ENCODE measurements at regions of chr9 and their contacts with region 1.

Region 1: GRCh38 chr9:134434894-134435506 is 108.7 kb downstream of the RXRA start:
- DNase-seq: peak; percentile 94
- H3K4me3 ChIP-seq: no peak overlapping the region
- H3K27ac ChIP-seq: peak overlapping the region; percentile 15
- H3K4me1 ChIP-seq: peaks cover 7% of the 10 kb centered on the region
- H3K27me3 ChIP-seq: no peaks in the 10 kb centered on the region
- CTCF ChIP-seq: no peak
- POLR2A ChIP-seq: no peak

Region 2: DNA sequence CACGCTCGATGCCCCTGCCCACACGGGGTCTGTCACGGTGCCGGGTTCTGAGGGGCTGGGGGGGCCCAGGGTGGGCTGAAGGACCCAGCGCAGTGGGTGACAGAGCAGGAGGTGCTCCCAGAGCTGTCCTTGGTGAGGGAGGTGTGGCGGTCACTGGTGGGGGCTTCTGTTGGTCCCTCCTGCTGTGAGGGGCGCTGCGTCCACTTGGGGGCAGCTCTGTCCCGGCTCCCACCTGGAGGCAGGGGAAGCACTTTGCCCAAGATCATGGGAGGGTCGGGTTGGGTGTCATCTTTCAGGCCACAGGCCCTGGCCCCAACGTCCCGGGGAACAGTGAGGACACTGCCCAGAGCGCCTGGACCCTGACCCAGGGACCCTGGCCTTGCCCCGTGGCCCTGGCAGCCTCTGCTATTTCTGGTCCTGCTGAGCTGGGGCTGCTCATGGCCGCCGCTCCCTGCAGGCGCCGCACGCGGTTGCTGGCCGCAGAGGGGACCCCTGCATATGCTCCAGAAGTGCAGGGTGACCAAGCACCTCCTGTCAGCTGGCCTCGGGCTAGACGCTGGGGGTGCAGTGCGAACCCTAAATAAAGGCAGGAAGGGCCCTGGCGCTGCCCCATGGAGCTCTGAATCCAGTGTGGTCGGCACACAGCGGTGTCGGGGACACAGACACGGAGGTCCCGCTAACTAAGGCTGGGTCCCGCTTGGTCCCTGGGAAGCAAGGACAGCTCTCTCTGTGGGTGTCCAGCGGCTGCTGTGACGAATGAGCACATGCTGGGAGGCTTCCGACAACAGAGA is 259.0 kb before region 1 on chr9:
- CTCF ChIA-PET with region 1: interaction called, 15 read pairs
- POLR2A ChIA-PET with region 1: no interaction called
- dilution Hi-C with region 1: no loop called
- intact Hi-C with region 1: no loop called
- DNase-seq: no peak
- H3K4me3 ChIP-seq: no peak overlapping the region
- H3K27ac ChIP-seq: no peak overlapping the region
- H3K4me1 ChIP-seq: no peaks in the 10 kb centered on the region
- H3K27me3 ChIP-seq: peaks cover 2 to 3% of the 10 kb centered on the region in 2 experiments
- CTCF ChIP-seq: no peak
- POLR2A ChIP-seq: no peak

Region 3: GRCh38 chr9:134375430-134376385 is 59.3 kb before region 1 on chr9:
- CTCF ChIA-PET with region 1: interaction called, 8 read pairs
- POLR2A ChIA-PET with region 1: no interaction called
- dilution Hi-C with region 1: no loop called
- intact Hi-C with region 1: loop called (anchors 2 kb)
- DNase-seq: peak; percentile 44
- H3K4me3 ChIP-seq: no peak overlapping the region
- H3K27ac ChIP-seq: peak overlapping the region; percentile 63
- H3K4me1 ChIP-seq: peaks cover 36% of the 10 kb centered on the region
- H3K27me3 ChIP-seq: no peaks in the 10 kb centered on the region
- CTCF ChIP-seq: peak in 1 of 2 donors; percentile 5
- POLR2A ChIP-seq: no peak

Region 4: GRCh38 chr9:134399435-134400056 is 35.5 kb before region 1 on chr9:
- CTCF ChIA-PET with region 1: interaction called, 4 read pairs
- POLR2A ChIA-PET with region 1: no interaction called
- dilution Hi-C with region 1: no loop called
- intact Hi-C with region 1: loop called (anchors 2 kb)
- DNase-seq: peak; percentile 52
- H3K4me3 ChIP-seq: no peak overlapping the region
- H3K27ac ChIP-seq: no peak overlapping the region
- H3K4me1 ChIP-seq: peaks cover 46% of the 10 kb centered on the region
- H3K27me3 ChIP-seq: no peaks in the 10 kb centered on the region
- CTCF ChIP-seq: peak; percentile 56 to 63
- POLR2A ChIP-seq: no peak

Region 5: GRCh38 chr9:134413890-134414731 is 20.9 kb before region 1 on chr9:
- CTCF ChIA-PET with region 1: interaction called, 6 read pairs
- POLR2A ChIA-PET with region 1: no interaction called
- dilution Hi-C with region 1: no loop called
- intact Hi-C with region 1: loop called (anchors 2 kb)
- DNase-seq: peak; percentile 94
- H3K4me3 ChIP-seq: no peak overlapping the region
- H3K27ac ChIP-seq: peak overlapping the region; percentile 66
- H3K4me1 ChIP-seq: peaks cover 26% of the 10 kb centered on the region
- H3K27me3 ChIP-seq: no peaks in the 10 kb centered on the region
- CTCF ChIP-seq: no peak
- POLR2A ChIP-seq: no peak